CD4-positive, alpha-beta T cell (primary cell): ENCODE measurements at regions of chr1 and their contacts with region 1.

Region 1: DNA sequence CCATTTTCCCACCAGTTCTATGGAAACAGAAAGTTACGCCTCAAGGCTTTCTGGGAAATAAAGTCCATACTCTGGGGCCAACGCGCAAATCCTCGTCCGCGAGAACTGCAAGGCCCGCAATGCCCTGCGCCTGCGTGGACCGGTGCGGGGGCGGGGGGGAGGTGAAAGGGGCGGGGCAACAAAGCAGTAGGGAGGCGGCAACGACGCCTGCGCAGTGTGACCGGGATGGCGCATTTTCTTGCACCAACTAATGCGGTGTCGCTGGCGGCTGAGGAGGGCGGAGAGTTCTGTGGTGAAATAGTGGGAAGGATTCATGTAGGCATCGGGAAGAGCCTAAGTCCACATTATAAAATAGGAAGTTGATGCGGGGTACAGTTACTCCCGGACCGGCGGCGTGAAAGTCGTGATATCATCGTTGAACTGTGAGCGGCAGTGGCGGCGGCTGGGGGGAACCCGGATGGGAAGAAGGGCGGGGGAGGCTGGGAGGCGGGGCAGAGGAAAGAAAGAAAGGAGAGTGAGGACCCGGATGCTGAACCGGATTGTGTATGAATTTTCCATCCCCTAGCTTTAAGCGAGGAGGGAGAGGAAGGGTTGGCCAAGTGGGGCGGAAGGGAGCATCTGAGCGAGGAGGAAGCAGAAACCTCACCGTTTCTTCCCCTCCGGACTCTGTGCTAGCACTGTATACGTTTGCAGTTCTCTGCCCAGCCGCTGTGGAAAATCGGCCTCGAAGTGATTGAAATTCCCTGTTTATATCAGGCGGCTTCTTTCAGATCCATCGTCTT is at the start of gene GGPS1:
- DNase-seq: peak; percentile 96 to 100 (median 99)
- ATAC-seq: peak; percentile 78
- H3K4me3 ChIP-seq: peak within 1 kb of the TSS; percentile 97
- H3K4me3 Mint-ChIP-seq: no peak within 1 kb of the TSS
- H3K27ac ChIP-seq: peak within 1 kb of the TSS; percentile 96 to 98
- H3K27ac Mint-ChIP-seq: no peak within 1 kb of the TSS
- H3K4me1 ChIP-seq: peaks cover 16% of the 10 kb centered on the region
- H3K4me1 Mint-ChIP-seq: peaks cover 23% of the 10 kb centered on the region
- H3K27me3 ChIP-seq: no peaks in the 10 kb centered on the region
- H3K27me3 Mint-ChIP-seq: no peaks in the 10 kb centered on the region
- CTCF ChIP-seq: peak; percentile 34
- total RNA-seq, gene GGPS1: 20.6 to 20.9 TPM

Region 2: GRCh38 chr1:235128456-235129328 is 199.9 kb before region 1 on chr1 and contains the start of gene TOMM20:
- CTCF ChIA-PET with region 1: no interaction called
- POLR2A ChIA-PET with region 1: interaction called, 4 read pairs
- intact Hi-C with region 1: loop called in 1 of 2 experiments (anchors 5 kb)
- DNase-seq: peak; percentile 86 to 99 (median 92)
- ATAC-seq: peak; percentile 91
- H3K4me3 ChIP-seq: peak within 1 kb of the TSS; percentile 86
- H3K4me3 Mint-ChIP-seq: peak within 1 kb of the TSS; percentile 98
- H3K27ac ChIP-seq: peak within 1 kb of the TSS; percentile 89 to 93
- H3K27ac Mint-ChIP-seq: peak within 1 kb of the TSS; percentile 98
- H3K4me1 ChIP-seq: peaks cover 38% of the 10 kb centered on the region
- H3K4me1 Mint-ChIP-seq: peaks cover 45% of the 10 kb centered on the region
- H3K27me3 ChIP-seq: no peaks in the 10 kb centered on the region
- H3K27me3 Mint-ChIP-seq: no peaks in the 10 kb centered on the region
- CTCF ChIP-seq: no peak
- total RNA-seq, gene TOMM20: 129 to 133 TPM

Region 3: DNA sequence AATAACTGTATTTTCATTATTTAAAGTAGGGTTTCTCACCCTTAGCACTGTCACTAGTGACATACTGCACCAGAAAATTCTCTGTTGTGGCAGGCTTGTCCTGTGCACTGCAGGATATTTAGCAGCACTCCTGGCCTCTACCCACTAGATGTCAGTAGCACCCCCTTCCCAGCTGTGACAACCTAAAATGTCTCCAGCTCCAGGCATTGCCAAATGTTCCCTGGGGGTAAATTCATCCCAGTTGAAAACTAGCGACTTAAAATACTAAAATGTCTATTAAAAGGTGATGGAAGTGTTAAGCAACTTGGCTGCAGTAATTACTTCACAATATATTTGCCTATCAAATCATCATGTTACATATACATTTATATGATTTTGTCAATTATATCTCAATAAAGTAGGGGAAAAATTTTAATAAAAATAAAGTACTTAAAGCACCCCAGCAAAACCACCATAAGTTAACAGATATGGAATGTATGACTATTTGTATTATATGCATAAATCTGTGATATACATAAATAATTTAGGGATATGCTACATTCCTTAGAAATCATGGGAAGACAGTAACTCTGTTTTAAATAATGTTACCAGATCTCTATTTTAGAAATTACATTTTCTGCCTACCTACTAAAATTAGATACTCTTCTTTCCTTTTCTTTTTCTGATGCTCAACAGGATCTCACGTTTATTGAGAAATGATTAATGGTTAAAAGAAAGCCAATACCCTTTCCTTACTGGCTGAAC is 75.2 kb before region 1 on chr1:
- CTCF ChIA-PET with region 1: interaction called, 12 read pairs
- POLR2A ChIA-PET with region 1: interaction called, 7 read pairs
- intact Hi-C with region 1: loop called (anchors 1 to 2 kb)
- DNase-seq: peak; percentile 41 to 83 (median 51)
- ATAC-seq: peak; percentile 97
- H3K4me3 ChIP-seq: no peak overlapping the region
- H3K4me3 Mint-ChIP-seq: no peak overlapping the region
- H3K27ac ChIP-seq: no peak overlapping the region
- H3K27ac Mint-ChIP-seq: peak overlapping the region; percentile 38
- H3K4me1 ChIP-seq: peaks cover 4% of the 10 kb centered on the region
- H3K4me1 Mint-ChIP-seq: peaks cover 47% of the 10 kb centered on the region
- H3K27me3 ChIP-seq: no peaks in the 10 kb centered on the region
- H3K27me3 Mint-ChIP-seq: no peaks in the 10 kb centered on the region
- CTCF ChIP-seq: peak; percentile 97

Region 4: DNA sequence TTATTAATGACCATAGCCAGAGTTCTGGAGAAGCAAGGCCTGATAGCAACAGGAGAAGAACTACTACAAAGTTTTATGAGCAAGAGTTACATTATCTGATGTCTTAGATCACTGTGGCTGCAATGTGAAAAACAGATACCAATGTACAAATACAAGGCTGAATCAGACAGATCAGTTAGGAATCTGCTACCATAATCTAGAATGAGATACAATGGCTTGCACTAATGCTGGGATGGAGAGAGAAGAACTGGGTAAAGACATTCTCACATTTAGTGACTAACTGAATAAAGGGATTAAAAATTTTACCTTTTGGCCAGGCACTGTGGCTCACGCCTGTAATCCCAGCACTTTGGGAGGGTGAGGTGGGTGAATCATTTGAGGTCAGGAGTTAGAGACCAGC is 41.9 kb before region 1 on chr1:
- CTCF ChIA-PET with region 1: no interaction called
- POLR2A ChIA-PET with region 1: interaction called, 3 read pairs
- intact Hi-C with region 1: loop called (anchors 5 kb)
- DNase-seq: no peak
- ATAC-seq: no peak
- H3K4me3 ChIP-seq: no peak overlapping the region
- H3K4me3 Mint-ChIP-seq: peak overlapping the region; percentile 22
- H3K27ac ChIP-seq: no peak overlapping the region
- H3K27ac Mint-ChIP-seq: peak overlapping the region; percentile 4
- H3K4me1 ChIP-seq: peaks cover 45% of the 10 kb centered on the region
- H3K4me1 Mint-ChIP-seq: peaks cover 79% of the 10 kb centered on the region
- H3K27me3 ChIP-seq: no peaks in the 10 kb centered on the region
- H3K27me3 Mint-ChIP-seq: no peaks in the 10 kb centered on the region
- CTCF ChIP-seq: no peak

Region 5: GRCh38 chr1:235304549-235305451 is 23.7 kb before region 1 on chr1:
- CTCF ChIA-PET with region 1: interaction called, 5 read pairs
- POLR2A ChIA-PET with region 1: interaction called, 11 read pairs
- intact Hi-C with region 1: no loop called
- DNase-seq: peak in 7 of 14 experiments; percentile 10 to 85 (median 29)
- ATAC-seq: peak; percentile 80
- H3K4me3 ChIP-seq: peak overlapping the region; percentile 8
- H3K4me3 Mint-ChIP-seq: peak overlapping the region; percentile 65
- H3K27ac ChIP-seq: peak overlapping the region; percentile 67 to 83
- H3K27ac Mint-ChIP-seq: peak overlapping the region; percentile 88
- H3K4me1 ChIP-seq: peaks cover 69% of the 10 kb centered on the region
- H3K4me1 Mint-ChIP-seq: peaks cover 56% of the 10 kb centered on the region
- H3K27me3 ChIP-seq: no peaks in the 10 kb centered on the region
- H3K27me3 Mint-ChIP-seq: no peaks in the 10 kb centered on the region
- CTCF ChIP-seq: no peak

Region 6: DNA sequence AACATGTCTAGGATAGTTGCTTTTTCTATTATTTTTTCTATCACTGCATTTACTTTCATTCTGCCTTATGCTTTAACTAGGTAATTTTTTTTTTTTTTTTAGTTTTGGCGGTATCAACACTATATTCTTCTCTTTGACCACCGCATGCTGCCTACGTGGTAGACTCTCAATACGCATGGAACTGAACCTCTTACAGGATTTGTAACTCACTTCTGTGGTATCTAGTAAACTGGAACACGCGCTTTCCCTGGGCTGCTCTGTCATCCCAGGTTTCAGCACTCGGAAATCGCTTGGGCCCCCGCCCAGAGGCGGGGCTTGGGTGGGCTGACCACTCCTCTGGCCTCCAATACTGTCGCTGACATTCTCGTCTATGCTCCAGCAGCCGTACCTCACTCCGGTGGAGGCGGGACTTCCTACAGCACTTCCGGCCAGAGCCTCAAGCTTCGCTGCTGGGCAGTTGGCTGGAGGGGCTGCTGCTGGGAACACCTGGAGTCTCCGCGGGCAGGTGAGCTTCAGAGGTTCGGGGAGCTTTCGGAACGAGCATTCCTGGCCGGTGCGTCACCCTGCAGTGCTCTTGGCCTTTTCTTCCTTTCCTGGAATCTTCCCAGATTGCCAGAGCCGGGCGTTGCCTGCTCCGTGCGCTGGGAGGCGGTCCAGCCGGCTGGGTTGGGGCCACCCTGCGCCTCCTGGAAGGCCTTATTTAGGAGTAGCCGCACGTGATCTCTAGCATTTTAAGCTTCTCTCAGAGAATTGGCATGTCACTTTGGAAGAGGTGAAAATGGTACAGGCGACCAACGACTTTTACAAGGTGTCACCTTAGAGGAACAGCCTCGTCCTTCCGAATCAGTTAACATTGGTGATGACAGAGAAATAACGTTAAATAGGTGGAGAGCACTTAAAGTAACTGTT is 38.7 kb after region 1 on chr1 and contains the start of gene TBCE:
- CTCF ChIA-PET with region 1: no interaction called
- POLR2A ChIA-PET with region 1: interaction called, 5 read pairs
- intact Hi-C with region 1: loop called (anchors 5 kb)
- DNase-seq: peak; percentile 55 to 91 (median 76)
- ATAC-seq: peak; percentile 96
- H3K4me3 ChIP-seq: peak within 1 kb of the TSS; percentile 84
- H3K4me3 Mint-ChIP-seq: peak within 1 kb of the TSS; percentile 99
- H3K27ac ChIP-seq: peak within 1 kb of the TSS; percentile 48 to 70
- H3K27ac Mint-ChIP-seq: peak within 1 kb of the TSS; percentile 89
- H3K4me1 ChIP-seq: peaks cover 11% of the 10 kb centered on the region
- H3K4me1 Mint-ChIP-seq: peaks cover 37% of the 10 kb centered on the region
- H3K27me3 ChIP-seq: no peaks in the 10 kb centered on the region
- H3K27me3 Mint-ChIP-seq: no peaks in the 10 kb centered on the region
- CTCF ChIP-seq: no peak
- total RNA-seq, gene TBCE: 7.0 to 8.4 TPM

Region 7: DNA sequence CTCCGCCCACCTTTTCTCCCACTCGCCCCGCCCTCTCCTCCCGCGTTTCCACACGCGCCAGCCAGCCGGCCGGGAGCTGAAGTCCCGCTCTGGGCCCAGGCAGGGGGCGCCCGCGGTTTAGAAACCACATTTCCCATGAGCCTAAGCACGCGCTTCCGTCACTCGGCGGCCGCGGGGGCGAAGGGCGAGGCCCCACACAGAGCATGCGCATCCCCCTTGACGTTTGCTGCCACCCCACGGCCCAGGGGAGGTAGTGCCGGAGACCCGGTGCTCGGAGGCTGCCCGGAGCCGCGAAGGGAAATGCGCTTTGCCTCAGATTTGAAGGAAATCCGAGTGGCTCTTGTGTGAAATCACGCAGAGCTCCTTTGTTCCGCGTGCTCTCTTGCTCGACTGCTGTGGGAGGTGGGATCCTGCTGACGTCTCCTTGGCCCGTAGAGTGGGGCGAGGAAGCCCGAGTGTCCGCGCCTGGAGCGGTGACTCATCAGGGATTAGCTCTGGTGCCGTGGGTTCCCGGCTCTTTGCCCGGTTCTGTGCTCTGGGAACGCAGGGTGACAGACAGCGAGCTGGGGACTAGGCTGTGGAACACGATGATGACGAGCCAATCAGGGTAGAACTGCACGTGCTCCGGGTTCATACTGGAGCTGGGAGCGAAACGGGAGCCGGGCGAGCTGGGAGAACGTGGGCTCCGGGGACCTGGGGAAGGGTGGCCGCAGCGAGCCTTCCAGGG is 176.1 kb after region 1 on chr1:
- CTCF ChIA-PET with region 1: no interaction called
- POLR2A ChIA-PET with region 1: interaction called, 5 read pairs
- intact Hi-C with region 1: loop called in 1 of 2 experiments (anchors 5 kb)
- DNase-seq: peak; percentile 96 to 100 (median 98)
- ATAC-seq: peak; percentile 86
- H3K4me3 ChIP-seq: peak overlapping the region; percentile 79
- H3K4me3 Mint-ChIP-seq: peak overlapping the region; percentile 92
- H3K27ac ChIP-seq: peak overlapping the region; percentile 89 to 93
- H3K27ac Mint-ChIP-seq: peak overlapping the region; percentile 96
- H3K4me1 ChIP-seq: peaks cover 15% of the 10 kb centered on the region
- H3K4me1 Mint-ChIP-seq: peaks cover 20% of the 10 kb centered on the region
- H3K27me3 ChIP-seq: no peaks in the 10 kb centered on the region
- H3K27me3 Mint-ChIP-seq: no peaks in the 10 kb centered on the region
- CTCF ChIP-seq: peak; percentile 91